Natural killer cell (primary cell): ENCODE measurements at regions of chr11 and their contacts with region 1.

Region 1: GRCh38 chr11:3849297-3849874 is 6.1 kb upstream of the STIM1 start:
- DNase-seq: peak in 1 of 2 donors; percentile 83
- ATAC-seq: peak; percentile 78 to 86 (median 80)
- H3K4me3 ChIP-seq: no peak overlapping the region
- H3K4me3 Mint-ChIP-seq: no peak overlapping the region
- H3K27ac ChIP-seq: no peak overlapping the region
- H3K27ac Mint-ChIP-seq: peak overlapping the region in 1 of 2 donors; percentile 43
- H3K4me1 ChIP-seq: peaks cover 12% of the 10 kb centered on the region
- H3K4me1 Mint-ChIP-seq: peaks cover 24% of the 10 kb centered on the region in 2 donors
- H3K27me3 ChIP-seq: no peaks in the 10 kb centered on the region
- H3K27me3 Mint-ChIP-seq: no peaks in the 10 kb centered on the region
- CTCF ChIP-seq: peak; percentile 73

Region 2: GRCh38 chr11:3882655-3883054 is 33.3 kb after region 1 on chr11:
- intact Hi-C with region 1: loop called (anchors 2 kb)
- DNase-seq: peak in 1 of 2 donors; percentile 53
- ATAC-seq: peak in 2 of 3 donors; percentile 30 to 44
- H3K4me3 ChIP-seq: no peak overlapping the region
- H3K4me3 Mint-ChIP-seq: no peak overlapping the region
- H3K27ac ChIP-seq: no peak overlapping the region
- H3K27ac Mint-ChIP-seq: peak overlapping the region; percentile 30 to 80
- H3K4me1 ChIP-seq: peaks cover 45% of the 10 kb centered on the region
- H3K4me1 Mint-ChIP-seq: peaks cover 71 to 78% of the 10 kb centered on the region in 2 donors
- H3K27me3 ChIP-seq: no peaks in the 10 kb centered on the region
- H3K27me3 Mint-ChIP-seq: no peaks in the 10 kb centered on the region
- CTCF ChIP-seq: peak; percentile 31

Region 3: DNA sequence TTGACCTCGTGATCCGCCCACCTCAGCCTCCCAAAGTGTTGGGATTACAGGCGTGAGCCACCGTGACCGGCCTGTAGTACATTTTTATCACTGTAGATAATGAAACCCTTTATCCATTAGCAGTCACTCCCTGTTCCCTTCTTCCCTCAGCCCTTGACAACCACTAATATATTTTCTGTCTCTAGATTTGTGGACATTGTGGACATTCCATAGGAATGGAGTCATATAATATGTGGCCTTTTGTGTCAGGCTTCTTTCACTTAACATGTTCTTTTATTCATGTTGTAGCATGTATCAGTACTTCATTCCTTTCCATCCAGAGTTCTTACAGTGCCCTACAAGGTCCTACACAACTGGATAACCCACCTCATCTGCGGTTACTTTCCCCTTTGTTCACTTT is 275.8 kb after region 1 on chr11:
- intact Hi-C with region 1: no loop called
- DNase-seq: no peak
- ATAC-seq: no peak
- H3K4me3 ChIP-seq: no peak overlapping the region
- H3K4me3 Mint-ChIP-seq: no peak overlapping the region
- H3K27ac ChIP-seq: no peak overlapping the region
- H3K27ac Mint-ChIP-seq: no peak overlapping the region
- H3K4me1 ChIP-seq: no peaks in the 10 kb centered on the region
- H3K4me1 Mint-ChIP-seq: peaks cover 0 to 7% of the 10 kb centered on the region in 2 donors
- H3K27me3 ChIP-seq: no peaks in the 10 kb centered on the region
- H3K27me3 Mint-ChIP-seq: no peaks in the 10 kb centered on the region
- CTCF ChIP-seq: no peak